B cell (primary cell): ENCODE measurements at regions of chr12 and their contacts with region 1.

Region 1: GRCh38 chr12:64403707-64404469 is at the start of gene XPOT:
- DNase-seq: peak; percentile 96
- ATAC-seq: peak; percentile 93
- H3K4me3 ChIP-seq: peak within 1 kb of the TSS; percentile 56 to 97 (median 91)
- H3K4me3 Mint-ChIP-seq: peak within 1 kb of the TSS; percentile 98
- H3K27ac ChIP-seq: peak within 1 kb of the TSS; percentile 71 to 80
- H3K27ac Mint-ChIP-seq: peak within 1 kb of the TSS; percentile 97
- H3K4me1 ChIP-seq: peaks cover 5 to 12% of the 10 kb centered on the region in 2 donors
- H3K4me1 Mint-ChIP-seq: peaks cover 15% of the 10 kb centered on the region
- H3K27me3 ChIP-seq: no peaks in the 10 kb centered on the region
- H3K27me3 Mint-ChIP-seq: no peaks in the 10 kb centered on the region
- CTCF ChIP-seq: no peak
- total RNA-seq, gene XPOT: 48.8 and 56.1 TPM in 2 replicates

Region 2: DNA sequence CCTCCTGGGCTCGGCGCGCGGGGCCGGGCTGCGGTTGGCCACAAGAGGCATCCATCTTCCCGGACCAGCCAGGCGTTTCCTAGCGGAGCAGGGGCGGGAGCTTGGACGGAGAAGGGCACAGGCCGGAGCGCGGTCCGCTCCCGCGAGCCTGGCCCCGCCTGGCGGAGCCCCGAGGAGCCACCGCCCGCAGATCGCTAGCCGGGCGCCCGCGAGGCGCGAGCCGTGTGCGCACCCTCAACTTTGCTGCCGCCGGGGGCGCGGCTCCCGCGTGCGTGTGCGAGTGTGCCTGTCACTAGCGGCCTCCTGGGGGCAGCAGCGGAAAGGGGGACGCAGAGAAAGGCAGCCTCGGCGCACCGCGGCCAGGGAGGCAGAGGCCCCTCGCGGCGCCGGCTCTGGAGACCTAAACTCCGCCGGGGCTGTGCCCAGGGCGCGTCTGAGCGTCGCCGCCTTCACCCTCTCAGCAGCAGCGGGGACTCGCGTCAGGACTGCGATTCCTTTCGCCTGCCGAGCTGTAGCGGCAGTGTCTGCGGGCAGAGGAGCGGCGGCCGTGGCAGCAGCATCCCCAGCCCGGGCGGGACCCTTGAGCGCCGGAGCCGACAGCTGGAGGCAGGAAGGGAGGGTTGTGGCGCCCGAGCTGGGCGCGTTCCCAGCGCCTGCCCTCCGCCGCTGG is 560.0 kb before region 1 on chr12:
- CTCF ChIA-PET with region 1: no interaction called
- POLR2A ChIA-PET with region 1: no interaction called
- intact Hi-C with region 1: loop called (anchors 10 kb)
- DNase-seq: peak; percentile 85
- ATAC-seq: peak; percentile 93
- H3K4me3 ChIP-seq: peak overlapping the region in 4 of 5 experiments; percentile 50 to 64 (median 60)
- H3K4me3 Mint-ChIP-seq: peak overlapping the region; percentile 79
- H3K27ac ChIP-seq: no peak overlapping the region
- H3K27ac Mint-ChIP-seq: no peak overlapping the region
- H3K4me1 ChIP-seq: peaks cover 8 to 13% of the 10 kb centered on the region in 2 donors
- H3K4me1 Mint-ChIP-seq: peaks cover 11% of the 10 kb centered on the region
- H3K27me3 ChIP-seq: peaks cover 0 to 17% (median 12%) of the 10 kb centered on the region in 4 experiments
- H3K27me3 Mint-ChIP-seq: peaks cover 29% of the 10 kb centered on the region
- CTCF ChIP-seq: peak; percentile 75

Region 3: DNA sequence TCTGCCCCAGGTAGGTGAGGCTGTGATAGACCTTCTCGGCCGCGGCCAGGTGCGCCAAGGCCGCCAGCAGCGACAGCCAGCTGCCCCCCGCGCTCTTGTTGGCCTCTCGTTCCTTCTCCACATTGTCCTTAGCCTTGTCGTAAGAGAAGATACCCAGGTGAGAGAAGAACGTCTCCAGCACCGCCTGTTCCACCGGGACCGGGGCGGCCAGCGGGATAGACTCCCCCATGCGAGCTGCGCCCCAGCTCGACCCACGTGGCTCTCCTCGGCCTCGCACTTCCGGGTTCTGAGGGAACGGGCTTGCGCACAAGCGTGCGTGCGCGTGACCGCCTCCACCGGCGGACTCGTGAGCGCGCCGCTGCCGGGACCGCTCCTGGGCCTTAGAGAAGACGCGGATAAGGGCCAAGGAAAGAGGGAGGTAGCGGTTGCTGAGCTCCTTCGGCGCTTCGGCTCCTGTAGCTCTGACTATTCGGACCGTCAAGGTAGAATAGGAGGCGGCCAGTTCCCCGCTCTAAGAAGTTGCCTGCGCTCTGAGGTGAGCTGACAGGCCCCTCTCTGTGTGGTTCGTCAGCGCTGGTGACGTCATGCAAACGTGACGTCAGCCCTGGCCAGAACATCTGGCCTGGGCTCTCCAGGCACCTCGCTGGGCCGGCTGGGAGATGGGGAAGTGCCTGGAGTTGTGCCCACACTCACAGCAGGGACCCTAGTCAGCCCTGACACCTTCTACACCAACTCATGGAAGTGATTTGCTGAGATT is 181.7 kb before region 1 on chr12 and contains the start of gene KICS2:
- CTCF ChIA-PET with region 1: no interaction called
- POLR2A ChIA-PET with region 1: interaction called, 3 read pairs
- intact Hi-C with region 1: loop called (anchors 1 kb)
- DNase-seq: peak; percentile 98
- ATAC-seq: peak; percentile 86
- H3K4me3 ChIP-seq: peak within 1 kb of the TSS; percentile 58 to 89 (median 80)
- H3K4me3 Mint-ChIP-seq: peak within 1 kb of the TSS; percentile 93
- H3K27ac ChIP-seq: peak within 1 kb of the TSS; percentile 92 to 97
- H3K27ac Mint-ChIP-seq: peak within 1 kb of the TSS; percentile 96
- H3K4me1 ChIP-seq: peaks cover 10 to 20% of the 10 kb centered on the region in 2 donors
- H3K4me1 Mint-ChIP-seq: peaks cover 31% of the 10 kb centered on the region
- H3K27me3 ChIP-seq: peaks cover 0 to 3% (median 0%) of the 10 kb centered on the region in 4 experiments
- H3K27me3 Mint-ChIP-seq: peaks cover 8% of the 10 kb centered on the region
- CTCF ChIP-seq: no peak
- total RNA-seq, gene KICS2: 18.7 and 21.2 TPM in 2 replicates

Region 4: GRCh38 chr12:64451687-64452558 is 48.0 kb after region 1 on chr12 and contains the start of gene TBK1:
- CTCF ChIA-PET with region 1: no interaction called
- POLR2A ChIA-PET with region 1: no interaction called
- intact Hi-C with region 1: loop called (anchors 1 kb)
- DNase-seq: peak; percentile 82
- ATAC-seq: peak; percentile 79
- H3K4me3 ChIP-seq: peak within 1 kb of the TSS; percentile 66 to 97 (median 90)
- H3K4me3 Mint-ChIP-seq: peak within 1 kb of the TSS; percentile 96
- H3K27ac ChIP-seq: peak within 1 kb of the TSS; percentile 63 to 77
- H3K27ac Mint-ChIP-seq: peak within 1 kb of the TSS; percentile 92
- H3K4me1 ChIP-seq: peaks cover 5 to 12% of the 10 kb centered on the region in 2 donors
- H3K4me1 Mint-ChIP-seq: peaks cover 38% of the 10 kb centered on the region
- H3K27me3 ChIP-seq: no peaks in the 10 kb centered on the region
- H3K27me3 Mint-ChIP-seq: no peaks in the 10 kb centered on the region
- CTCF ChIP-seq: peak; percentile 38
- total RNA-seq, gene TBK1: 38.5 and 46.9 TPM in 2 replicates

Region 5: GRCh38 chr12:64759035-64759901 is 355.4 kb after region 1 on chr12 and contains the start of gene GNS:
- CTCF ChIA-PET with region 1: no interaction called
- POLR2A ChIA-PET with region 1: no interaction called
- intact Hi-C with region 1: loop called (anchors 2 kb)
- DNase-seq: peak; percentile 94
- ATAC-seq: peak; percentile 92
- H3K4me3 ChIP-seq: peak within 1 kb of the TSS; percentile 67 to 89 (median 84)
- H3K4me3 Mint-ChIP-seq: peak within 1 kb of the TSS; percentile 94
- H3K27ac ChIP-seq: peak within 1 kb of the TSS; percentile 48 to 86
- H3K27ac Mint-ChIP-seq: peak within 1 kb of the TSS; percentile 94
- H3K4me1 ChIP-seq: peaks cover 24 to 25% of the 10 kb centered on the region in 2 donors
- H3K4me1 Mint-ChIP-seq: peaks cover 41% of the 10 kb centered on the region
- H3K27me3 ChIP-seq: no peaks in the 10 kb centered on the region
- H3K27me3 Mint-ChIP-seq: no peaks in the 10 kb centered on the region
- CTCF ChIP-seq: no peak
- total RNA-seq, gene GNS: 26.7 and 31.7 TPM in 2 replicates

Region 6: GRCh38 chr12:66130277-66131066 is 1726.6 kb after region 1 on chr12 and contains the start of gene LLPH:
- CTCF ChIA-PET with region 1: no interaction called
- POLR2A ChIA-PET with region 1: no interaction called
- intact Hi-C with region 1: loop called (anchors 1 kb)
- DNase-seq: peak; percentile 90
- ATAC-seq: peak; percentile 90
- H3K4me3 ChIP-seq: peak within 1 kb of the TSS; percentile 72 to 100 (median 96)
- H3K4me3 Mint-ChIP-seq: peak within 1 kb of the TSS; percentile 98
- H3K27ac ChIP-seq: peak within 1 kb of the TSS; percentile 82 to 84
- H3K27ac Mint-ChIP-seq: peak within 1 kb of the TSS; percentile 94
- H3K4me1 ChIP-seq: peaks cover 17 to 20% of the 10 kb centered on the region in 2 donors
- H3K4me1 Mint-ChIP-seq: peaks cover 48% of the 10 kb centered on the region
- H3K27me3 ChIP-seq: no peaks in the 10 kb centered on the region
- H3K27me3 Mint-ChIP-seq: no peaks in the 10 kb centered on the region
- CTCF ChIP-seq: no peak
- total RNA-seq, gene LLPH: 21.1 and 23.4 TPM in 2 replicates

Region 7: GRCh38 chr12:66301944-66302826 is 1898.3 kb after region 1 on chr12 and contains the start of gene HELB:
- CTCF ChIA-PET with region 1: no interaction called
- POLR2A ChIA-PET with region 1: no interaction called
- intact Hi-C with region 1: loop called (anchors 10 kb)
- DNase-seq: peak; percentile 92
- ATAC-seq: peak; percentile 95
- H3K4me3 ChIP-seq: peak within 1 kb of the TSS; percentile 69 to 99 (median 92)
- H3K4me3 Mint-ChIP-seq: peak within 1 kb of the TSS; percentile 99
- H3K27ac ChIP-seq: peak within 1 kb of the TSS; percentile 68
- H3K27ac Mint-ChIP-seq: peak within 1 kb of the TSS; percentile 94
- H3K4me1 ChIP-seq: peaks cover 10 to 15% of the 10 kb centered on the region in 2 donors
- H3K4me1 Mint-ChIP-seq: peaks cover 36% of the 10 kb centered on the region
- H3K27me3 ChIP-seq: no peaks in the 10 kb centered on the region
- H3K27me3 Mint-ChIP-seq: peaks cover 4% of the 10 kb centered on the region
- CTCF ChIP-seq: no peak
- total RNA-seq, gene HELB: 10.0 and 11.8 TPM in 2 replicates